Body of pancreas (tissue), 4 donors: ENCODE measurements at regions of chr9 and their contacts with region 1.

Region 1: GRCh38 chr9:109182940-109183798 is 16.1 kb upstream of the FRRS1L start:
- DNase-seq: peak; percentile 64 to 81 (median 77)
- ATAC-seq: peak; percentile 78
- H3K4me3 ChIP-seq: no peak overlapping the region
- H3K27ac ChIP-seq: no peak overlapping the region
- H3K4me1 ChIP-seq: no peaks in the 10 kb centered on the region
- H3K27me3 ChIP-seq: no peaks in the 10 kb centered on the region
- CTCF ChIP-seq: peak; percentile 18 to 64 (median 46)
- POLR2A ChIP-seq: no peak

Region 2: DNA sequence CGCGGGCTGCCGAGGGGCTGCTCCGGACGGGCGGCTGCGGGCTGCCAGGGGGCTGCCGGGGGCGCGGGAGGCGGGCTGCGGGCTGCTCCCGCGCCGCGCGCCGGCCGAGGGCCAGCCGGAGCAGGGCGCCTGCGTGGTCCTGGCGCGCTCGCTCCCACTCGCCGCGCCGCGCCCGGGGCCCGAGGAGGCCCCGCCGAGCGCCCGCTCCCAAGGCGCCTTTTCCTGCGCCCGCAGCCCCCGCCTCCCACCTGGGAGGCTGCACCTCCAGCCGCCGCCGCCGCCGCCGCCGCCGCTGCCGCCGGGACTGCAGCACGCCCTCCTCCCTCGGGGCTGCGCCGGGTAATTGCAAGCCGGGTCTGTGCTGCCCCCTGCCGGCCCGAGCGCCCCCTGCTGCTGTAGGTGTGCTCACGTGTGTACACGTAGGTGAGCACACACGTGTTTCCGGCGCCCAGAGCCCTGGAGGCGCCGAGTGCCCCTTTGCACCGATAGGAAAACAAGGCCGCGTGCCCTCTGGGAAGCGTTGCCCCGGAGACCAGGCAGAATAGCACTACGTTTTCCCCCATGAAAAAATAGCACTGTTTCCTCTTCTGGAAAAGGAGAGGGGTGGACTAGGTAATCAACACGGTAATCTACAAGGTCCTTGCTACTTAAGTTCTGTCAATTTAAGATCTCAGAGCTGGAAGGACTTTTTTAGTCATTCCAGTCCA is 137.7 kb after region 1 on chr9 and contains the start of gene EPB41L4B:
- intact Hi-C with region 1: loop called (anchors 10 kb)
- DNase-seq: peak; percentile 96 to 99 (median 97)
- ATAC-seq: peak; percentile 80
- H3K4me3 ChIP-seq: peak within 1 kb of the TSS; percentile 64 to 79
- H3K27ac ChIP-seq: peak within 1 kb of the TSS; percentile 92 to 100 (median 94)
- H3K4me1 ChIP-seq: peaks cover 31% of the 10 kb centered on the region
- H3K27me3 ChIP-seq: no peaks in the 10 kb centered on the region
- CTCF ChIP-seq: peak; percentile 91 to 100 (median 99)
- POLR2A ChIP-seq: peak; percentile 60 to 68 (median 60)
- total RNA-seq, gene EPB41L4B: 41.9 to 122 TPM

Region 3: DNA sequence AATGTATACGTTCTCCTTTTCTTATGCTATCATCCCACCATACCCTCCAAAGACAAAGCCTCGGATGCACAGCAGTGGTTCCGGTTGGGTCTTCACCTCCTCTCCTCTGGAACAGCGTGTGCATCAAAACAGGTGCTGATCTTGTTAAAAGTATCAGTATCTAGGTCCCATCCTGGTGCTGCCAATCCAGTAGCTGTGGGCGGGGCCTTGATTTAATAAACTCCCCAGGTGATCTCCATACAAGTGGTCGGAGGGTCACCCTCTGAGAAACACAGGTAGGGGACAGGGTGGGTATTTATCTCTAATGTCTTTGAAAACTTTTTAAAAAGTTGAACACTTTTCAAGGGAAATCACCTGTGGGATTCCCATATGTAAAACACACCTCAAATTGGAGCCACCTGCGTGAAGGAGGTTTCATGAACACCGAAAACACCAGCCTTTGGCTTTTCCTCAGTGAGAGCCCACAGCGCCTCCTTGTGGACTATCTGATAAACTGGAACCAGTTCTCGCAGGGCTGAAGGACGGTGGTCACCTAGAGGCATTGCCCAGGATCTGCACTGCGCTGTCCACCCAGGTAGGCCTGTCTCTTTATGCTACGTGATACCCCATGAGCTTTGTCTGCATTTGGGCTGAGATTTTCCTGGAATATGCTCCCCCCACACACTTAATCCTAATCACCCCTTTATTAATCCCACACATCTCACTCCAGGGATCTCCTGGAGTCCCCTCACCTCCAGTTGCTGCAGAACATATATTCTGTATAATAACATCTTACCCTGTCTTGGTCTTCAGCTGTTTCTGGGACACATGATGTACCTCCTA is 218.2 kb after region 1 on chr9:
- intact Hi-C with region 1: loop called (anchors 10 kb)
- DNase-seq: peak; percentile 75 to 79 (median 78)
- ATAC-seq: peak; percentile 83
- H3K4me3 ChIP-seq: no peak overlapping the region
- H3K27ac ChIP-seq: no peak overlapping the region
- H3K4me1 ChIP-seq: no peaks in the 10 kb centered on the region
- H3K27me3 ChIP-seq: no peaks in the 10 kb centered on the region
- CTCF ChIP-seq: peak; percentile 62 to 84 (median 78)
- POLR2A ChIP-seq: no peak